Left ventricle myocardium superior (tissue), 1 donor: ENCODE measurements at regions of chr12 and their contacts with region 1.

Region 1: DNA sequence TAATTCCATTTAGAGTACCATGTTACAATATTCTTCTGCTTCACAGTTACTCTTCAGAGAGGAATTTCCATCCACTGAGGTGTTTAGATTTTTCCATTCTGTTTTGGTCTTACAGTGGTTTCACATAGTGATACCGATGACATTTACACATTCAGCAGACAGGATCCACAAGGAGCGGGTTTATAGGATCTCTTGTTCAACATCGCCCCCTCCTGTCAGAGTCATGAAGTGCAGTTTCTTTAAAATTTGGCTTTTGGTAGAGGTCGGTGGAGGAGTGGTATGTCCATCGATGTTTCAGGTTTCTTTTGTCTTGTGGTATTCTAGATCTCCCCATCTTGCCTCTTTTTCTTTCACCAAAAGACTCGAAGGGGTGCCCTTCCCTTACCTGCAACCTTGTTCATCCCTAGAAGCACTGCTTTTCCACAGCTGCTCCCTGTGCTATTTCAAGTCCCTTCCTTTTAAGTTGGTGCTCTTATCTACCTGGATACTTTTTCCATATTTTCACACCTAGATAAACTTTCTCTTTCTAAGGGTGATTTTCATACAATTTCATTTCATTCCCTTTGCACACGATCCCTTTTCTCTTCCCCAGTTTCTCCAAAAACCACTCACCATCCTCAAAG is 181.3 kb downstream of the ITPR2 start:
- DNase-seq: no peak
- ATAC-seq: peak; percentile 64

Region 2: GRCh38 chr12:26097046-26097878 is 554.4 kb before region 1 on chr12:
- intact Hi-C with region 1: loop called (anchors 10 kb)
- DNase-seq: peak; percentile 65
- ATAC-seq: peak; percentile 96

Region 3: GRCh38 chr12:26327975-26328644 is 323.6 kb before region 1 on chr12:
- intact Hi-C with region 1: no loop called
- DNase-seq: no peak
- ATAC-seq: no peak